Activated CD8-positive, alpha-beta T cell treated with anti-CD3 and anti-CD28 coated beads, Interleukin-2, amount 10 ng/mL, durations not matched to agents 7 days and 5 days (primary cell): ENCODE measurements at regions of chr7 and their contacts with region 1.

Region 1: DNA sequence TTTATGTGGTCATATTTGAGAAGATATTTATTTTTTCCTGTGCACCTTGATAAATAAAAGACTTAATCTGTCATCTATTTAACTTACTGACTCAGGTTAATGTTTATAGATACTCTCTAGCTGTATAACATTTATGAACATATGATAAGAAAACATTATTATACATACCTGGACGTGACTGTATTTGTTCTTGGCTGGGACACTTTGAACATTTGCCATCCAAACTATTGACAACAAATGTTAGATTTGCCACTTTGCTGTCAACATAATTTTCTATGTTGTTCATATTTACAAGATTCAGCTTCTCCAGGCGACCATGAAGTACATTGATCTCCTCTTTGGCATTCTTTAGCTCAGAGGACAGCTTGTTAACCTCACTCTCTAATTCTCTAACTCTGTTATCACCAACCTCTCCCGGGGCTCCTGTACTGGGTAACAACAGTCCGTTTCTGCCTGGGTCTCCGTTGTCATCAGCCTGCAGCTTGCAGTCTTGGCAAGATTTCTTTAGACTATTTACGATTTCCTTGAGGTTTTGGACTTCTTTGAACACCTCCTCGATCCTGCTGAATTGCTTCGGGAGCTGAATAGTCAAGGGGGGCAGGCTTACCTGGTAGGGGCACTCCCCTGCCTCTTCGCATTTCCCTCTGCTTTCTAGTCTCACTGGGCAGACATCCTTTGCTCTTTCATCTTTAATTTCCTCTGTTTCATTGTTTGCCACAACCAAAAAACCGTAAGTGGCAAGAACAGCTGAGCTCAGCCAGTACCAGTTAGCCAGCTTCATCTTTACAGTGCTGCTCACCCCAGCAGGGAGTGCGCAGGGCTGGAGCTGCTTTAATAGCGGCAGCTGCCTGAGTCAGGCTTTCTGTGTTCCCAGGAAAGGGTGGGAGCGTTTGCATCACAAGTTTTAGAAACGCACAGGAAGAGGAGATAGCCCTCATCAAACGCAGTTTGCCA is at the start of gene FGL2:
- DNase-seq: peak; percentile 47
- ATAC-seq: peak; percentile 88
- H3K4me3 Mint-ChIP-seq: peak within 1 kb of the TSS; percentile 79
- H3K27ac Mint-ChIP-seq: peak within 1 kb of the TSS; percentile 75
- H3K4me1 Mint-ChIP-seq: peaks cover 51% of the 10 kb centered on the region
- H3K27me3 Mint-ChIP-seq: no peaks in the 10 kb centered on the region
- total RNA-seq, gene FGL2: 1.6 TPM

Region 2: DNA sequence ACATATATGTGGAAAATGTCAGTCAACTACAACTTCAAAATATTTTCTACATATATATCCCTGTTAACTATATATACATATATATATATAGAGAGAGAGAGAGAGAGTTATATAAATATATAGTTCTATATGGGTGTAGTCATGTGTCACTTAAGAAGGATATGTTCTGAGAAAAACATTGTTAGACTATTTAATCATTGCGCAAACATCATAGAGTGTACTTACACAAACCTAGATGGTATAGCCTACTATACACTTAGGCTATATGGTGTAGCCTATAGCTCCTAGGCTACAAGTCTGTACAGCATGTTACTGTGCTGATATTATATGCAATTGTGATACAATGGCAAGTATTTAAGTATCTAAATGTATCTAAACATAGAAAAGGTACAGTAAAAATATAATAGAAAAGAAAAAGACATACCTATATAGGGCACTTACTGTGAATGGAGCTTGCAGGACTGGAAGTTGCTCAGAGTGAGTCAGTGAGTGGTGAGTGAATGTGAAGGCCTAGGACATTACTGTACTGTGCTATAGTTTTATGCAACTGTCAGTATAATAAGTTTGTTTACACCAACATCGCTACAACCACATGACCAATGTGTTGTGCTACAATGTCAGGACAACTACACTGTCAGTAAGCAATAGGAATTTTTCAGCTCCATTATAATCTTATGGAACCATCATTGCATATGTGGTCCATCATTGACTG is 18.3 kb after region 1 on chr7:
- CTCF ChIA-PET with region 1: interaction called, 12 read pairs
- POLR2A ChIA-PET with region 1: no interaction called
- DNase-seq: no peak
- ATAC-seq: no peak
- H3K4me3 Mint-ChIP-seq: no peak overlapping the region
- H3K27ac Mint-ChIP-seq: no peak overlapping the region
- H3K4me1 Mint-ChIP-seq: peaks cover 13% of the 10 kb centered on the region
- H3K27me3 Mint-ChIP-seq: no peaks in the 10 kb centered on the region